ENCODE measurements at regions of chr5 and their contacts with region 1.

Region 1: GRCh38 chr5:107431998-107432397 is 238.7 kb downstream of the EFNA5 start:
- DNase-seq: no peak
- H3K4me3 ChIP-seq: no peak overlapping the region
- H3K27ac ChIP-seq: peak overlapping the region; percentile 38 to 54
- H3K4me1 ChIP-seq: peaks cover 0 to 7% of the 10 kb centered on the region in 2 donors
- H3K27me3 ChIP-seq: no peaks in the 10 kb centered on the region
- CTCF ChIP-seq: no peak
- POLR2A ChIP-seq: no peak

Region 2: DNA sequence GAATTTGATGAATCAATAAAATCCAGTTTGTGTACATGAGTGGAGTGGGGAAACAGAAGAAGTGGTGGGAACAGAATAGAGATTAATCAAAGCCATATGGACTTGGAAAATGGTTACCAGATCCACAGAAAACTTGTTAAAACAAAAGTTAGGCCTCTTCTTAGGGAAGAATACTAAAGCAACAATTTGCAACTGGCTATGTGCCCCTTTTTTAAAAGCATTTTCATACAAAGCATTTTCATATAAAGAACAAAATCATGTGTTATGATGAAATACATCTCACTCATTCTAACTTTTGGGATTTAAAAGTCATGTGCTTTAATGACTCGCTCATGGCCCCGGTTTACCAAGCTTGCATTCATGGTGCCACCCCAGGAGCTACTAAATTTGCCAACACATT is 38.1 kb before region 1 on chr5:
- intact Hi-C with region 1: loop called (anchors 2 kb)
- DNase-seq: no peak
- H3K4me3 ChIP-seq: no peak overlapping the region
- H3K27ac ChIP-seq: peak overlapping the region; percentile 40 to 44
- H3K4me1 ChIP-seq: peaks cover 0 to 1% of the 10 kb centered on the region in 2 donors
- H3K27me3 ChIP-seq: no peaks in the 10 kb centered on the region
- CTCF ChIP-seq: no peak
- POLR2A ChIP-seq: no peak

Region 3: GRCh38 chr5:107446972-107447371 is 15.0 kb after region 1 on chr5:
- intact Hi-C with region 1: loop called (anchors 1 kb)
- DNase-seq: no peak
- H3K4me3 ChIP-seq: no peak overlapping the region
- H3K27ac ChIP-seq: no peak overlapping the region
- H3K4me1 ChIP-seq: no peaks in the 10 kb centered on the region
- H3K27me3 ChIP-seq: no peaks in the 10 kb centered on the region
- CTCF ChIP-seq: no peak
- POLR2A ChIP-seq: no peak

Measured in breast epithelium (tissue), 4 donors.